ENCODE measurements at regions of chr1 and their contacts with region 1.

Region 1: GRCh38 chr1:22969304-22969709 is 3.4 kb downstream of the LACTBL1 start:
- DNase-seq: peak; percentile 89
- H3K4me3 ChIP-seq: no peak overlapping the region
- H3K27ac ChIP-seq: no peak overlapping the region
- H3K4me1 ChIP-seq: peaks cover 4% of the 10 kb centered on the region
- H3K27me3 ChIP-seq: peaks cover 28 to 43% of the 10 kb centered on the region in 2 experiments
- CTCF ChIP-seq: no peak
- POLR2A ChIP-seq: no peak

Region 2: GRCh38 chr1:22665752-22666151 is 303.6 kb before region 1 on chr1:
- CTCF ChIA-PET with region 1: interaction called, 42 read pairs
- POLR2A ChIA-PET with region 1: no interaction called
- dilution Hi-C with region 1: loop called (anchors 25 kb)
- intact Hi-C with region 1: loop called (anchors 1 kb)
- DNase-seq: peak; percentile 47
- H3K4me3 ChIP-seq: no peak overlapping the region
- H3K27ac ChIP-seq: no peak overlapping the region
- H3K4me1 ChIP-seq: no peaks in the 10 kb centered on the region
- H3K27me3 ChIP-seq: peaks cover 2 to 10% of the 10 kb centered on the region in 2 experiments
- CTCF ChIP-seq: peak; percentile 72 to 79
- POLR2A ChIP-seq: no peak

Region 3: GRCh38 chr1:22673486-22674409 is 295.6 kb before region 1 on chr1:
- CTCF ChIA-PET with region 1: interaction called, 42 read pairs
- POLR2A ChIA-PET with region 1: no interaction called
- dilution Hi-C with region 1: loop called (anchors 25 kb)
- intact Hi-C with region 1: loop called (anchors 1 kb)
- DNase-seq: peak; percentile 74
- H3K4me3 ChIP-seq: no peak overlapping the region
- H3K27ac ChIP-seq: no peak overlapping the region
- H3K4me1 ChIP-seq: peaks cover 10% of the 10 kb centered on the region
- H3K27me3 ChIP-seq: peaks cover 11 to 12% of the 10 kb centered on the region in 2 experiments
- CTCF ChIP-seq: peak; percentile 67 to 86
- POLR2A ChIP-seq: no peak

Region 4: GRCh38 chr1:23548704-23549143 is 579.4 kb after region 1 on chr1:
- CTCF ChIA-PET with region 1: no interaction called
- POLR2A ChIA-PET with region 1: no interaction called
- dilution Hi-C with region 1: no loop called
- intact Hi-C with region 1: no loop called
- DNase-seq: no peak
- H3K4me3 ChIP-seq: no peak overlapping the region
- H3K27ac ChIP-seq: peak overlapping the region; percentile 3
- H3K4me1 ChIP-seq: peaks cover 16% of the 10 kb centered on the region
- H3K27me3 ChIP-seq: no peaks in the 10 kb centered on the region
- CTCF ChIP-seq: no peak
- POLR2A ChIP-seq: no peak

Measured in endothelial cell of umbilical vein (primary cell).